ENCODE measurements at regions of chr11 and their contacts with region 1.

Region 1: DNA sequence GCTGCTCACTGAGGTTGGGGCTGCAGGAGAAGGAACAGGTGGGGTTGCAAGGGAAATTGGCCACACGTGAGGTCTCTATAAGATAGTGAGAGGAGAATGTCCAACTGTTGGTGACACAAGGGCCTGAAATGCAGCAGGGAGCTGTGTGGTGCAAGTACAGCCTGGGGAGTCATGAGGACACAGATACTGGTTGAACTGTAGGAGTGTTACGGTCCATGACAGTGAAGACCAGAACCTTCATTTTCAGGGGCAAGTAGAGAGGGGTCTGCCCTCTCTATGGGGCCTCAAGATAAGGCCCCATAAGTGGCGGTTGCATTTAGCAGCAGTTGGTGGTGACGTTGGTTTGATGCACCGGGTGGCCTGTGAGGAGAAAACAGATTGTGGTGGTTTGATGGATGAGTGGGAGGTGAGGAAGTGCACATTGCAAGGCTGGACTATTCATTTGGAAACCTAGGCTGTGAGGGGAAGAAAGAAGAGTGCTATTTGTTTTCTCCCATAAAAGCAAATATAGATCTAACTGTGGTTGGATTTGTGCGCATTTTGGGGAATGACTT is 39.4 kb downstream of the MICAL2 start:
- DNase-seq: peak; percentile 80
- H3K4me3 Mint-ChIP-seq: peak overlapping the region; percentile 58
- H3K27ac Mint-ChIP-seq: peak overlapping the region; percentile 98
- H3K4me1 Mint-ChIP-seq: peaks cover 76% of the 10 kb centered on the region
- H3K27me3 Mint-ChIP-seq: no peaks in the 10 kb centered on the region

Region 2: DNA sequence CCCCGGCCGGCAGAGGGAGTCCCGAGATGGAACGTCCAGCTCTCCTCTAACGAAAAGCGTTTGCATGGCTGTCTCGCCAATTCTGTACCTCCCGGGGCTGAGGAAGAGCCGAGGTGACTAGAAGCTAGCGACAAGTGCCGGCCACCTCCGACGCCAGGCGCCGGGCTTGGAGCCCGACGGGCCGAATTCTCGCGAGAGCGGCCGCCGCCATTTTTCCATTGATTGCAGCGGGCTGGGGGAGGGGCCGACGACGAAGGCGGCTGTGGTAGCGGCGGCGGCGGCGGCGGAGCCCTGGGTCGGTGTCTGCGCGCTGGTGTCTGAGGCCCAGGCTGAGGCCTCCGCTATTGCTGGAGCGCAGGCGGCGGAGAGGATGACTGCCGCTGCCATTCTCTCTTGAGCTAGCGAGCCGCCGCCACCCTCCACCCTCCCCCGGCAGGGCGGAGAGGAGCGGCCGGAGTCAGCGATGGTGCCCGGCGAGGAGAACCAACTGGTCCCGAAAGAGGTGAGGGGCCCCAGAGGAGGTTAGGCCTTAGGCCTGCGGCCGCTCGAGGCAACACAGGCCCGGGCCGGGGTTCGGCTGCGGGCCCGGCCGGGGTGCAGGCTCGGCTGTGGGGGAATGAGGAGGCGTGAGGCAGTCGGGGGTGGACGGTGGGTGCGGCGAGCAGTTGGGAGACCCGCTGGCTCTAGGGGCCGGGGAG is 307.9 kb before region 1 on chr11 and contains the start of gene USP47:
- intact Hi-C with region 1: loop called (anchors 2 kb)
- DNase-seq: peak; percentile 98
- H3K4me3 Mint-ChIP-seq: no peak within 1 kb of the TSS
- H3K27ac Mint-ChIP-seq: no peak within 1 kb of the TSS
- H3K4me1 Mint-ChIP-seq: peaks cover 27% of the 10 kb centered on the region
- H3K27me3 Mint-ChIP-seq: peaks cover 17% of the 10 kb centered on the region
- total RNA-seq, gene USP47: 51.9 and 54.0 TPM in 2 replicates

Region 3: GRCh38 chr11:12110201-12110713 is 39.5 kb before region 1 on chr11 and contains the start of gene MICAL2:
- intact Hi-C with region 1: loop called (anchors 1 kb)
- DNase-seq: peak; percentile 97
- H3K4me3 Mint-ChIP-seq: peak within 1 kb of the TSS; percentile 89
- H3K27ac Mint-ChIP-seq: peak within 1 kb of the TSS; percentile 99
- H3K4me1 Mint-ChIP-seq: peaks cover 57% of the 10 kb centered on the region
- H3K27me3 Mint-ChIP-seq: no peaks in the 10 kb centered on the region
- total RNA-seq, gene MICAL2: 501 and 510 TPM in 2 replicates

Region 4: DNA sequence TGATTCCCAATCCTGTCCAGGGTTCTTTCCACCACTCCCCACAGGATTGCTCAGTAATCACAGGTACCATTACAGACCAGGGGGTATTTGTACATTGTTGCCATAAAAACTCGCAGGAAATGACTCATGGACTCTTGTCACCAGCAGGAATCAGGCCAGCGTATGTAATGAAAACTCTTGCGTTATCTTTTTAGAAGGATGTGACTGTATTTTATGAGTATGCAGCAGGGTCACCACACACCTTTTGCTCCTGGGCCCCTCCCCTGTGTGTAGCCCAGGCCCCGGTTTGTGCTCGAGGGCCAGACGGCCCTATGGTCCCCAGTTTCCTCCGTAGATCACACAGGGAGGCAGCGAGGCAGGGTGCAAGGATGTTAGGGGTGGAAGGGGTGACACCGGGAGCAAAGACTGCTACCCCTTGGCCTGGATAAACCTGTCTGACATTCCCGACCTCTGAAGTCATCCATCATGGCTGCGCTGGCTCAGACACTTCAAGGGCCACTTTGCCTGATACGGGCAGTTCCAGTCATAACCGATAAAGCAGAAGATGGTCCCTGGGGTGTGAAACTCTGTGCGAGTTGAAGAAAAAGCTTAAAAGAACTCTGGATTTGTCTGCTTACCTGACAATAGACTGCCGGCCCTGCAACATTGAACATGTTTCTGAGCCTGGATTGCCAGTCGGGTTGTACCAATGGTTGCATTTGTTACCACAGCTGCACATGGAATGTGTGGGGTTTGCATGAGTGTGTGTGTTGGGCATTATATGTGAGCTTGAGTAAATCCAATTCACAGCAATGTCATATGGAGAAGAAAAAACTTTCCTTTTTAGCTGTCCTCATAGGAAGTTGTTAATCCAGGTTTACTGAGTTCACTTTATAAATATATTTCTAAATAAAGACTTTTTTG is 17.6 kb after region 1 on chr11:
- intact Hi-C with region 1: loop called (anchors 1 kb)
- DNase-seq: peak; percentile 65
- H3K4me3 Mint-ChIP-seq: peak overlapping the region; percentile 22
- H3K27ac Mint-ChIP-seq: peak overlapping the region; percentile 84
- H3K4me1 Mint-ChIP-seq: peaks cover 65% of the 10 kb centered on the region
- H3K27me3 Mint-ChIP-seq: no peaks in the 10 kb centered on the region

Region 5: DNA sequence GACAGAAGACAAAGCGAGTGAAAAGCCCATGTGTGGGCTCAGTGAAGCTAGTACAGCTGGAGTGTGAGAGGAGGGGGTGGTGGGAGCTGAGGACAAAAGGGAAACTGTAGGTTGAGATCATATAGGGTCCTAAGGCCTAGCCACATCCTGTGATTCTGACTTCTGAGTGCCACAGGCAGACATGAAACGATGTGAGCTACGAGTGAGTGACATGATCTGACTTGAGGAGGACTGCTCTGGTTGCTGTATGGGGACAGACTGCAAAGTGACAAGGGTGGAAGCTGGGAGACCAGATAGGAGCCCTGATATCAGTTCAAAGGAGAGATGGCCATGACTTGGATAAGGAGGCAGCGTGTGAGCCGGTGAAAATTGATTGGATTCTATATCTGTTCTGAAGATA is 46.0 kb after region 1 on chr11:
- intact Hi-C with region 1: loop called (anchors 1 kb)
- DNase-seq: peak; percentile 90
- H3K4me3 Mint-ChIP-seq: peak overlapping the region; percentile 94
- H3K27ac Mint-ChIP-seq: peak overlapping the region; percentile 96
- H3K4me1 Mint-ChIP-seq: peaks cover 70% of the 10 kb centered on the region
- H3K27me3 Mint-ChIP-seq: no peaks in the 10 kb centered on the region

Region 6: DNA sequence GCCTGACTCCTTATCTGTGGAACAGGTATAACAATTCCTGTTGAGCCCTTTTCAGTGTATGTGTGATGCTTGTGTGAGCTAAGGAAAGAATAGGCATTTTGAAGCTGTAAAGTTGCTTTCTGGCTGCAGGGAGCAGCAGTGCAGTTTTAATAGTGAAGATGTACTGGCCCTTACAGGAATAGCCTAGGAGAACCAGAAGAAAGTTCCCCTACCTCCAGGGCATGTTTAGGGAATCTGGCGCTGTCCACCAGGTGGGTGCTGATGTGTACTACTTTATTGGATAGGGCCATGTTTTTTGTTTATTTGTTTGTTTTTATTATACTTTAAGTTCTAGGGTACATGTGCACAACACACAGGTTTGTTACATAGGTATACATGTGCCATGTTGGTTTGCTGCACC is 1139.3 kb after region 1 on chr11:
- intact Hi-C with region 1: loop called (anchors 5 kb)
- DNase-seq: no peak
- H3K4me3 Mint-ChIP-seq: no peak overlapping the region
- H3K27ac Mint-ChIP-seq: peak overlapping the region; percentile 91
- H3K4me1 Mint-ChIP-seq: peaks cover 58% of the 10 kb centered on the region
- H3K27me3 Mint-ChIP-seq: no peaks in the 10 kb centered on the region

Measured in activated CD4-positive, alpha-beta T cell treated with anti-CD3 and anti-CD28 coated beads, Interleukin-2, amount 10 ng/mL, durations not matched to agents 24 days and 14 days (primary cell).